Activated T-helper 1 cell treated with anti-CD3 and anti-CD28 coated beads, Interleukin-12 subunit alpha, Interleukin-12 subunit beta, Interleukin-2, Interleukin-4 antibody, amounts not matched to agents 30 ng/mL and 10 ng/mL and 1 ng/mL, durations not matched to agents 14 hours and 24 hours and 36 hours (primary cell): ENCODE measurements at regions of chr3 and their contacts with region 1.

Region 1: GRCh38 chr3:30347679-30348216 is 258.7 kb upstream of the TGFBR2 start:
- DNase-seq: peak; percentile 46
- H3K4me3 Mint-ChIP-seq: peak overlapping the region; percentile 56
- H3K27ac Mint-ChIP-seq: peak overlapping the region; percentile 74
- H3K4me1 Mint-ChIP-seq: peaks cover 85% of the 10 kb centered on the region
- H3K27me3 Mint-ChIP-seq: peaks cover 4% of the 10 kb centered on the region

Region 2: DNA sequence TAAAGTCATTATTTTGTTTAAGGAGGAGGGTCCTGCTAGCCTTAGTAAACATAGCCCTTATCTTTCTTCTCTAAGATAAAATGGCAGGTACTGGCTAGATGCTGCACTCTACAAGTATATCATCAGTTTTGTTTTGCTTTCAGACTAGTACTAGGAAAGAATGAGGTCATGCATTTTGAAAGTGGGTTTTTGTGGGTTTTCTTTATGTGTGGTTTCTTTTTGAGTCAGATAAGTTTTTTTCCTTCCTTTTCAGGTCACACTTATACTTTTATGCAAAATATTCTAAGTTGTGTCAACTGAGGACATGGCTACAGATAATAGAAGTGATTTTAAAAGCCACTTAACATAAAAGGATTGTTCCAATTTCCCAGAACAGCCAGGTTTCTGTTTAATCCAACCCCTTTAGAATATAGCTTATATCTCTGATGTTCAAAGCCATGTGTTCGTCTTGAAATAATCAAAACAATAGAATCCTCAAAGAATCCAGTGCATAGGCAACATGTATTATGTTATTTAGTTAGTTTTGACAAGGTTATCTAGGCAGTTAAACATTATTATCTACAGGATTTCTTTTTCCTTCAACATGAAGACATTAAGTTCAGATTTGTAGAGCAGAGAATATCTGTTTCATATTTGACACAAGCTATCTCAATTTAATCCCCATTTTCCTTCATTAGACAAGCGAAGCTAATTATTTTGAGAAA is 660.7 kb before region 1 on chr3:
- intact Hi-C with region 1: loop called (anchors 5 kb)
- DNase-seq: peak; percentile 5
- H3K4me3 Mint-ChIP-seq: no peak overlapping the region
- H3K27ac Mint-ChIP-seq: peak overlapping the region; percentile 36
- H3K4me1 Mint-ChIP-seq: peaks cover 8% of the 10 kb centered on the region
- H3K27me3 Mint-ChIP-seq: peaks cover 5% of the 10 kb centered on the region

Region 3: GRCh38 chr3:30199096-30199759 is 148.5 kb before region 1 on chr3:
- intact Hi-C with region 1: no loop called
- DNase-seq: peak; percentile 31
- H3K4me3 Mint-ChIP-seq: no peak overlapping the region
- H3K27ac Mint-ChIP-seq: no peak overlapping the region
- H3K4me1 Mint-ChIP-seq: peaks cover 14% of the 10 kb centered on the region
- H3K27me3 Mint-ChIP-seq: no peaks in the 10 kb centered on the region

Region 4: GRCh38 chr3:30302027-30302426 is 45.7 kb before region 1 on chr3:
- intact Hi-C with region 1: loop called (anchors 2 kb)
- DNase-seq: peak; percentile 12
- H3K4me3 Mint-ChIP-seq: no peak overlapping the region
- H3K27ac Mint-ChIP-seq: no peak overlapping the region
- H3K4me1 Mint-ChIP-seq: peaks cover 29% of the 10 kb centered on the region
- H3K27me3 Mint-ChIP-seq: no peaks in the 10 kb centered on the region

Region 5: GRCh38 chr3:30332196-30333021 is 15.3 kb before region 1 on chr3:
- intact Hi-C with region 1: no loop called
- DNase-seq: no peak
- H3K4me3 Mint-ChIP-seq: no peak overlapping the region
- H3K27ac Mint-ChIP-seq: no peak overlapping the region
- H3K4me1 Mint-ChIP-seq: peaks cover 24% of the 10 kb centered on the region
- H3K27me3 Mint-ChIP-seq: peaks cover 2% of the 10 kb centered on the region

Region 6: GRCh38 chr3:30496066-30496966 is 148.6 kb after region 1 on chr3:
- intact Hi-C with region 1: no loop called
- DNase-seq: no peak
- H3K4me3 Mint-ChIP-seq: no peak overlapping the region
- H3K27ac Mint-ChIP-seq: no peak overlapping the region
- H3K4me1 Mint-ChIP-seq: peaks cover 32% of the 10 kb centered on the region
- H3K27me3 Mint-ChIP-seq: peaks cover 2% of the 10 kb centered on the region

Region 7: DNA sequence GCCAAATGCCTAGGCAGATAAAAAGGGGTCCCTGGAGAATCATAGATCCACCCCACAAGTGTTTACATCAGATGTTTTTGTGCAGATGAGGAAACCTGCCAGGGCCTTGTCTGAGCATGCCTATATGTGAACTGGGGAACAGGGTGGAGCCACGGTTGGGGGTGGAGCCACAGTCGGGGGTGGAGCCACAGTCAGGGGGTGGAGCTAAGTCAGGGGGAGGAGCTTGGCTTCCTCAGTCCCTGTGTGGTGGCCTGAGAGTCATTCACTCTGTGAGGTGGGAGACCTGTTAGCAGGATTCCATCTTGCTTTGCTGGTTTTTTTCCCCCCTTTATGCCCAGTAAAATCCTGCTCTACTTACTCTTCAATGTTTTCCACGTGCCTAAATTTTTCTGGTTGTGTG is 200.9 kb after region 1 on chr3:
- intact Hi-C with region 1: loop called (anchors 5 kb)
- DNase-seq: peak; percentile 15
- H3K4me3 Mint-ChIP-seq: no peak overlapping the region
- H3K27ac Mint-ChIP-seq: no peak overlapping the region
- H3K4me1 Mint-ChIP-seq: peaks cover 28% of the 10 kb centered on the region
- H3K27me3 Mint-ChIP-seq: peaks cover 3% of the 10 kb centered on the region

Region 8: GRCh38 chr3:30644593-30645012 is 296.9 kb after region 1 on chr3:
- intact Hi-C with region 1: loop called (anchors 1 kb)
- DNase-seq: peak; percentile 66
- H3K4me3 Mint-ChIP-seq: peak overlapping the region; percentile 57
- H3K27ac Mint-ChIP-seq: peak overlapping the region; percentile 94
- H3K4me1 Mint-ChIP-seq: peaks cover 93% of the 10 kb centered on the region
- H3K27me3 Mint-ChIP-seq: no peaks in the 10 kb centered on the region

Region 9: GRCh38 chr3:31105438-31106077 is 757.8 kb after region 1 on chr3:
- intact Hi-C with region 1: loop called (anchors 10 kb)
- DNase-seq: peak; percentile 17
- H3K4me3 Mint-ChIP-seq: no peak overlapping the region
- H3K27ac Mint-ChIP-seq: peak overlapping the region; percentile 49
- H3K4me1 Mint-ChIP-seq: peaks cover 55% of the 10 kb centered on the region
- H3K27me3 Mint-ChIP-seq: no peaks in the 10 kb centered on the region

Region 10: GRCh38 chr3:32106280-32106928 is 1758.7 kb after region 1 on chr3 and contains the start of gene GPD1L:
- intact Hi-C with region 1: loop called (anchors 10 kb)
- DNase-seq: peak; percentile 93
- H3K4me3 Mint-ChIP-seq: peak within 1 kb of the TSS; percentile 97
- H3K27ac Mint-ChIP-seq: peak within 1 kb of the TSS; percentile 89
- H3K4me1 Mint-ChIP-seq: peaks cover 28% of the 10 kb centered on the region
- H3K27me3 Mint-ChIP-seq: no peaks in the 10 kb centered on the region
- total RNA-seq, gene GPD1L: 16.3 and 16.6 TPM in 2 replicates